HEK293T (cell line): ENCODE measurements at regions of chr13 and their contacts with region 1.

Region 1: DNA sequence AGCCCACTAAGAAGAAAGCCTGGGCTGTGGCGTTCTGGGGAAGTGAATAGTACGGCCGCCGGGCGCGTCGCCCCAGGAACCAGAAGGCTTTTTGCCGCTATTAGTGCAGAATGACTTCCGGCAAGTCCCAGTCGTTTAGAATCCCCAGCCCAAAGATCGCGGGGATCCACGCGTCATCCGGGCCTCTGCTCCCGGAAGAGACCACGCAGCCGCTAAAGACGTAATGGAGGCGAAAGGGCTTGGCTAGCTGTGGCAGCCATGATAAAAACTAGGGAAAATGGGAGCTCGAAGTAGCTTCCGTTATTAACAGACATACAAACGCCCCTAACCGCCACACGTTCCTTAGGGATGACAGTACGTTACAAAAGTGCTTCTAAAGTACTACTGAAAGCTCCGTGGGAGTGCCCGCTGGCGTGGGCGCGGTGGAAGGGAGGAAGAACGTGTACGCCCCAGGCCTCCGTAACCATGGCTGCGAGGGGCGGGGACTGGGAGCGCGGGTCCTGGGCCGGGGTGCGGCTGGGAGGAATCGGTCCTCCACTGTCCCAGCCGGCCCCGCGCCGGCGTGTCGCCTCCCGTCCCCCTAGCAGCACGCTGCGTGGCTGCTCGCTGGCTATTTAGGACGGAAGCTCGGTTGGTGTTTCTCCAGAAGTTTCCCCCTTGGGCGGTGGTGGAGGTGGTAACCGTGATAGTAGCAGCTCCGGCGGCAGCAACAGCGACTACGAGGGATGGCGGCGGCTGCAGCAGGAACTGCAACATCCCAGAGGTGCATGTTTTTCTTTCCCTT is at the start of gene SUGT1:
- DNase-seq: peak; percentile 87

Region 2: DNA sequence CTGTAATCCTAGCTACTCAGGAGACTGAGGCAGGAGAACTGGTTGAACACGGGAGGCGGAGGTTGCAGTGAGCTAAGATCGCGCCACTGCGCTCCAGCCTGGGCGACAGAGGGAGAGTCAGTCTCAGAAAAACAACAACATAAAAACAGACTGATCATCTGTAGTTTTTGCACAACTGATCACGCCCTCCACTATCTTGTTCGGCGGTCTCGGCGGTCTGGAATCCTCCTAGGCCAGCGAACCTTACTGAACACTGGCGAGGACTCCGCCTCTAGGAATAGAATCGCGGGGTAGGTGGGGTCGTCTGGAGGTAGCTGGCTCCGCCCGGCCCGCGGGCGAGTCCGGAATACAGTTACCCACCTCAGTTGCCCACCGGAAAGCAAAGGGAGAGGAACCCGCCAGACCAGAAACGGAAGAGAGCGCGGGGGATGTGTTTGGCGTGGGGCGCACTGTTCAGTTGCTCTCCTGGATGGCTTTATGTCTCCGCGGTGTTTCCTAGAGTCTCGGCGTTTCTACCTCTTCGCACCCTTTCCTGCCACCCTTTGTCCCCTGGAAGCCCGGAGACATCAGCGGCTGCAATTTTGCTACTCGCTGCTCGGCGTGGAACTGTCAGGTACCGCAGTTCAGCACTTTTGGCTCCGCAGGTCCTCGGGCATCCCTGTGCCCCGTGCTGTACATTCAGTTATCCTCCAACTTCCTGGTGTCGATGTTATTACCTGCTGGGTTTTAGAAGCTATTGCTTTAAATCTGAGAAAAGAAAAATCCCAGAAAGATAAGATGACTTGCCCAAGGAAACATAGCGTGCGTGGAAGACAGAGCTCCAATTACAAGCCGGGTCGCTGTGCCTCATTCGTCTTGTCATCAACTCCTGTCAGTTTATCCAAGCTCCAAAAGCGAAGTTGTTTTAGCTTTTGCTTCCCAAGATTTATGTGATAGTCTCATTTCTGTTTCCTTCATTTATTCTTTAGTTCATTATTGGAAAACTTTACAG is 35.0 kb before region 1 on chr13:
- CTCF ChIA-PET with region 1: interaction called, 3 read pairs
- POLR2A ChIA-PET with region 1: interaction called, 35 read pairs
- DNase-seq: peak; percentile 85

Region 3: DNA sequence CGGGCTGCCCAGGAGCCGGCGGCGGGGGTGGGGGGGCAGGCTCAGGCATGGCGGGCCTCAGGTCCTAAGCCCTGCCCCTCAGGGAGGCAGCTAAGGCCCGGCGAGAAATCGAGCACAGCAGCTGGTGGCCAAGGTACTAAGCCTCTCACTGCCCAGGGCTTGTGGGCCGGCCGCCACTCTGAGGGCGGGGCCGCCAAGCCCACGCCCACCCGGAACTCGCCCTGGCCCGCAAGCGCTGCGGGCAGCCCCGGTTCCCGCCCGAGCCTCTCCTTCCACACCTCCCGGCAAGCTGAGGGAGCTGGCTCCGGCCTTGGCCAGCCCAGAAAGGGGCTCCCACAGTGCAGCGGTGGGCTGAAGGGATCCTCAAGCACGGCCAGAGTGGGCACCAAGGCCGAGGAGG is 162.9 kb after region 1 on chr13:
- CTCF ChIA-PET with region 1: no interaction called
- POLR2A ChIA-PET with region 1: no interaction called
- DNase-seq: no peak

Region 4: DNA sequence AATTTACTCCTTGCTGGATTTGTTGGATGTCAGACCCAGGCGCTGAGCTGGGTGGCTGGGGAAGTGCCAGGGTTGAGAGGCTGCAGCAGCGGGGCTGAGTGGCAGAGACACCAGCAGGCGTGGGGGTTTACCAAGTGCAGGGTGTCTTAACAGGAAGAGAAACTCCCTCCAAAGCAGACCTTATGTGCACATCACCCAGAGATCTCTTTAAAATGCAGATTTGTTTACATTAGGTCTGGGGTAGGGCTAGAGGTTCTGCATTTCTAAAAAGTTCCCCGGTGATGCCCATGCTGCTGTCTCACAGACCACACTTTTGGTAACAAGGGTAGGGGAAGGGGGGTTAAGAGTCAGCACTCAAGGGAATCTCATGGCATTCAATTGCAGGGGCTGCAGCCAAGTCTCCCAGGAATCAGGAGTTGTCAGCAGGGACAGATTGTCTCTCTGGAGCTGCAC is 295.6 kb after region 1 on chr13:
- CTCF ChIA-PET with region 1: no interaction called
- POLR2A ChIA-PET with region 1: no interaction called
- DNase-seq: no peak